ENCODE measurements at regions of chr1 and their contacts with region 1.

Region 1: GRCh38 chr1:51636764-51637522 is 20.1 kb downstream of the OSBPL9 start:
- DNase-seq: peak; percentile 33
- H3K4me3 ChIP-seq: no peak overlapping the region
- H3K27ac ChIP-seq: peak overlapping the region; percentile 15 to 42 (median 31)
- H3K4me1 ChIP-seq: peaks cover 0 to 32% (median 6%) of the 10 kb centered on the region in 4 donors
- H3K27me3 ChIP-seq: no peaks in the 10 kb centered on the region
- CTCF ChIP-seq: no peak
- EP300 ChIP-seq: no peak
- POLR2A ChIP-seq: no peak

Region 2: GRCh38 chr1:50412813-50413476 is 1224.0 kb before region 1 on chr1:
- in situ Hi-C with region 1: no loop called
- intact Hi-C with region 1: no loop called
- DNase-seq: no peak
- H3K4me3 ChIP-seq: no peak overlapping the region
- H3K27ac ChIP-seq: no peak overlapping the region
- H3K4me1 ChIP-seq: peaks cover 0 to 19% (median 3%) of the 10 kb centered on the region in 4 donors
- H3K27me3 ChIP-seq: peaks cover 96% of the 10 kb centered on the region
- CTCF ChIP-seq: no peak
- EP300 ChIP-seq: no peak
- POLR2A ChIP-seq: no peak

Region 3: GRCh38 chr1:51253691-51254090 is 383.3 kb before region 1 on chr1:
- in situ Hi-C with region 1: no loop called
- intact Hi-C with region 1: loop called (anchors 10 kb)
- DNase-seq: no peak
- H3K4me3 ChIP-seq: no peak overlapping the region
- H3K27ac ChIP-seq: no peak overlapping the region
- H3K4me1 ChIP-seq: peaks cover 0 to 36% (median 1%) of the 10 kb centered on the region in 4 donors
- H3K27me3 ChIP-seq: no peaks in the 10 kb centered on the region
- CTCF ChIP-seq: no peak
- EP300 ChIP-seq: no peak
- POLR2A ChIP-seq: no peak

Measured in transverse colon (tissue), 4 donors.